Ascending aorta (tissue), 2 donors: ENCODE measurements at regions of chr1 and their contacts with region 1.

Region 1: GRCh38 chr1:228902781-228903433 is 167.6 kb downstream of the RHOU start:
- DNase-seq: peak; percentile 72 to 97
- H3K4me3 ChIP-seq: no peak overlapping the region
- H3K27ac ChIP-seq: peak overlapping the region; percentile 83 to 95
- H3K4me1 ChIP-seq: peaks cover 0 to 10% of the 10 kb centered on the region in 2 donors
- H3K27me3 ChIP-seq: no peaks in the 10 kb centered on the region
- CTCF ChIP-seq: no peak

Region 2: GRCh38 chr1:228842094-228842775 is 60.7 kb before region 1 on chr1:
- intact Hi-C with region 1: loop called (anchors 5 kb)
- DNase-seq: peak; percentile 62 to 85
- H3K4me3 ChIP-seq: no peak overlapping the region
- H3K27ac ChIP-seq: peak overlapping the region; percentile 50 to 75
- H3K4me1 ChIP-seq: peaks cover 10 to 20% of the 10 kb centered on the region in 2 donors
- H3K27me3 ChIP-seq: no peaks in the 10 kb centered on the region
- CTCF ChIP-seq: no peak

Region 3: DNA sequence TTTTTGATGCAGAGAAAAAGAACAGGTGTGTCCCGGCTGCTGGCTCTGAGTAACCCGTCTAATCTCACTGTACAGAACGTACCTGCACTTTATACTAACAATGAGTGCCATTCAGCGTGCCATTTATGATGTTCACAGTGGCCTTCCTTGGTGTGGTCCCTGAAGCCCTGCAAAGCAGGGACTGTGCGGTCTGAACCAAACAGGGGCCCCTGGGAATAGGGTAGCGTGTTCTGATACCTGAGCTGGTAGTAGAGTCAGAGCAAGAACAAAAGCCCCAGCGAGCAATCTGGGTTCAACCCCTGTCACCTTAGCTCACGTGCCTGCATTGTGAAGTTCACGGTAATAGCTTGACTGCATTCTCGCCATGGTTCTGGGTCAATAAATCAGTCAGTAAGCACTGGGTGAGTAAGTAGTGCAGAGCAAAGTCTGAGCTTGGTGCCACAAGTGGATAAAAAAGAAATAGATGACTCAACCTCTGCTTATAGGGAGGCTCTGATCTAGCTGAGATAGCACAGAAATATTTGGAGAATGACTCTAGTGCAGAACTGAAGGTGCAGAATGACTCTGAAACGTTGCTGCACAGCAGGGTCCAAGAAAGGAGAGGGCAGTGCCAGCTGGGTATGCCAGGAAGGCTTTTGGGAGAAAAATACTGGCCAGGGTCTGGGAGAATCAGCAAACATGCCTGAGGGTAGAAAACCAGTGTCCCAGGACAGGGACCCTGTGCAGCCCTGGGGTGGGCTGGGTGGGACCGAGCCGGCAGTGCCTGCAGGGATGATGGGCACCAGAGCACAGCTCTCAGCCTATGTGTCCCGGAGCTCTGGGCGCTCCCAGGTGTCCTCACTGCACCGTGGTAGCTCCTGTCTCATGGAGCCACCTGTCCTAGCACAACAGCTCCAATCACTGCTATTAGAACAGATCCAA is 41.7 kb before region 1 on chr1:
- intact Hi-C with region 1: loop called (anchors 5 kb)
- DNase-seq: peak in 1 of 2 donors; percentile 69
- H3K4me3 ChIP-seq: no peak overlapping the region
- H3K27ac ChIP-seq: peak overlapping the region in 1 of 2 donors; percentile 19
- H3K4me1 ChIP-seq: peaks cover 5 to 18% of the 10 kb centered on the region in 2 donors
- H3K27me3 ChIP-seq: no peaks in the 10 kb centered on the region
- CTCF ChIP-seq: no peak

Region 4: GRCh38 chr1:229087339-229087738 is 184.4 kb after region 1 on chr1:
- intact Hi-C with region 1: loop called (anchors 5 kb)
- DNase-seq: peak in 1 of 2 donors; percentile 80
- H3K4me3 ChIP-seq: no peak overlapping the region
- H3K27ac ChIP-seq: peak overlapping the region; percentile 79 to 84
- H3K4me1 ChIP-seq: peaks cover 6 to 41% of the 10 kb centered on the region in 2 donors
- H3K27me3 ChIP-seq: no peaks in the 10 kb centered on the region
- CTCF ChIP-seq: no peak

Region 5: DNA sequence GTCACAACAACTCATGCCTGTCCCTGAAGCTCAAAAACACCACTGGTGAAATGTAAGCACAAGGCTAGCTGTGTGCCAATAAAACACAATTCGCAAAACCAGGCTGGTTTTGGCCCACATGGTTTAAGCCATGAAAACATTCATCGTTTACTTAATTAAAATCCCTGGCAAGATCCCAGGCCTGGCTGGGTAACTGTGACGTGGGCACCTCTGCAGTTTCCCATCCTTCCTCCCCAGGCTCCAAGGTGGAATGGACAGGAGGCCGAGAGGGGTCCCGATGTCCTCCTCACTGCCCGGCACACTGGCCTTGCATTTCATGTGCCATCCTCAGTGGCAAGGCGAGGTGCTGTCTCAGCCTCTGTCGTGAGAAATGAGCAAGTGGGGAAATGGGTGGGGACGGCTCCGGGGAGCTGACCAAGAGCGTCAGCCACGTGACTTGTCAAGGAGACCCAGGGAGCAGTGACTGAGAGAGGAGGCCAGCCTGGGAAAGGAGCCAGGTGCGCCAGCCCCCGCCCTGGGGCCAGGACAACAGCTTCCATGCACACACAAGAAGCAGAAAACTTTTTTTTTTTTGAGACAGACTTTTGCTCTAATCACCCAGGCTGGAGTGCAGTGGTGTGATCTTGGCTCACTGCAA is 214.9 kb after region 1 on chr1:
- intact Hi-C with region 1: loop called (anchors 5 kb)
- DNase-seq: peak; percentile 46 to 94
- H3K4me3 ChIP-seq: no peak overlapping the region
- H3K27ac ChIP-seq: peak overlapping the region; percentile 56 to 72
- H3K4me1 ChIP-seq: peaks cover 4 to 35% of the 10 kb centered on the region in 2 donors
- H3K27me3 ChIP-seq: no peaks in the 10 kb centered on the region
- CTCF ChIP-seq: no peak

Region 6: GRCh38 chr1:229156872-229157271 is 254.0 kb after region 1 on chr1:
- intact Hi-C with region 1: loop called (anchors 10 kb)
- DNase-seq: peak in 1 of 2 donors; percentile 75
- H3K4me3 ChIP-seq: no peak overlapping the region
- H3K27ac ChIP-seq: peak overlapping the region in 1 of 2 donors; percentile 6
- H3K4me1 ChIP-seq: peaks cover 0 to 12% of the 10 kb centered on the region in 2 donors
- H3K27me3 ChIP-seq: no peaks in the 10 kb centered on the region
- CTCF ChIP-seq: peak; percentile 69 to 73 (median 72)

Region 7: DNA sequence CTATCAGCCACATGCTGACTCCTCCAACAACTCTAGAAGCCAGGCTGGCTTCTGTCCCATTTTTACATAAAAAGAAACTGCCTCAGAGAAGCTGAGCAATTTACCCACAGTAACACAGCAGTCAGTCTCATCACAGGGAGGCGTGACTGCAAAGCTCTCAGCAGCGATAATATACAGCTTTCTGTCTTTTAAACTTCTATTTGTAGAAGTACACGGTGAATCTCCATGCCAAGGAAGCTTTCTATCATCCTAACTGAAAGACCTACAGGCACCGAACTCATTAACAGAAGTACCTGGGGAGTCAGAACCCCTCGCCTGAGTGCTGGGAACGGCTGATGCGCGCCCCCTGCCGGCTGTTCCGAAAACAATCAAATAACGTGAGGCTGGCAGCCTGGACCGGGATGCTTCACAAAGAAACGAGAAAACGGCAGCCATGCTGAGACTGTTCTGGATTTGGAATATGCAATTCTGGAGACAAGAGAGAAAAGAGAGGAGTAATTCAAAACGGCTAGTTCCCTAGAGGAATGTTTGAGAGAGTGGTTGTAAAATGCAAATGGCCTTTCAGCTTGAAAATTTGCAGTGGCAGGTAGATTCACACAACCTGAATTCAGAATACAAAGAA is 324.5 kb after region 1 on chr1:
- intact Hi-C with region 1: loop called (anchors 5 kb)
- DNase-seq: peak; percentile 30 to 90
- H3K4me3 ChIP-seq: no peak overlapping the region
- H3K27ac ChIP-seq: no peak overlapping the region
- H3K4me1 ChIP-seq: peaks cover 9 to 25% of the 10 kb centered on the region in 2 donors
- H3K27me3 ChIP-seq: no peaks in the 10 kb centered on the region
- CTCF ChIP-seq: peak; percentile 74 to 86 (median 85)